ENCODE measurements at regions of chr11 and their contacts with region 1.

Region 1: DNA sequence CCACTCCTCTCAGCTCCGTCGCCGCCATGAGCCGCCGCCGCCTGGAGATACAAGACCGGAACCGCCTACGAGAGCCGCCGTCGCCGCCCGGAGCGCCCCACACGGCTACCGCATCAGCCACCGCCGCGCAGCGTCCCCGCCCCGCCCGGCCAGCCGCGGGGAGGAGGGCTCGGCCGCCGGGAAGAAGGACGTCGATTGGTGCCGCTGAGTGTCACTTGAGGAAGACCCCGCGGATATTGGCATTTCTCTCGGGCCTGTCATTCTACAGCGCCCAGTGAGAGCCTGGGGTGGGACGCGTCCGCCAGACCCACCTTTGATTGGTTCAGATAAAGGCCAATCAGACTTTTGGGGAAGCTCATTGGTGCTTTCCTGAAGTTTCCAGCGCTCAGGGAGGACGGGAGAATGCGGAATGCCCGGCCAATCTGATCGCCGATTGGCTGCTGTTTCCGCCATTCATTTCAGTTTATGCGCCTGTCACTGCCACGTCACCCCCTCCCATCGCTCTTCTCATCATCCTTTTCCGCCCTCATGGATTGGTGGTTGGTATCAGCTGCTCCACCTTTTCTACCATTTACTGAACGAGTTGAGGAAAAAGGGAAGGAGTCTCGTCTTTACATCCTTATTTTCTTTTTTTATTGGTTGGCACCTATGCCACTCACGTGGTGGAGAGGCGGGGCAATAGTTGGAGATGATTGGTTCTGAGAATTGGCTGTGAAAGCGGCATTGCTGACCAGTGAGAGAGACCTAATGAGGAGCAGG is at the start of gene OSBP:
- DNase-seq: peak; percentile 97 to 100
- ATAC-seq: peak; percentile 76 to 90 (median 78)
- H3K4me3 ChIP-seq: peak within 1 kb of the TSS; percentile 94
- H3K4me3 Mint-ChIP-seq: peak within 1 kb of the TSS; percentile 95
- H3K27ac ChIP-seq: peak within 1 kb of the TSS; percentile 87
- H3K27ac Mint-ChIP-seq: peak within 1 kb of the TSS; percentile 83 to 95
- H3K4me1 ChIP-seq: peaks cover 15% of the 10 kb centered on the region
- H3K4me1 Mint-ChIP-seq: peaks cover 51% of the 10 kb centered on the region in 2 donors
- H3K27me3 ChIP-seq: no peaks in the 10 kb centered on the region
- H3K27me3 Mint-ChIP-seq: no peaks in the 10 kb centered on the region
- CTCF ChIP-seq: no peak
- total RNA-seq, gene OSBP: 40.5 to 58.5 (median 51.3) TPM

Region 2: DNA sequence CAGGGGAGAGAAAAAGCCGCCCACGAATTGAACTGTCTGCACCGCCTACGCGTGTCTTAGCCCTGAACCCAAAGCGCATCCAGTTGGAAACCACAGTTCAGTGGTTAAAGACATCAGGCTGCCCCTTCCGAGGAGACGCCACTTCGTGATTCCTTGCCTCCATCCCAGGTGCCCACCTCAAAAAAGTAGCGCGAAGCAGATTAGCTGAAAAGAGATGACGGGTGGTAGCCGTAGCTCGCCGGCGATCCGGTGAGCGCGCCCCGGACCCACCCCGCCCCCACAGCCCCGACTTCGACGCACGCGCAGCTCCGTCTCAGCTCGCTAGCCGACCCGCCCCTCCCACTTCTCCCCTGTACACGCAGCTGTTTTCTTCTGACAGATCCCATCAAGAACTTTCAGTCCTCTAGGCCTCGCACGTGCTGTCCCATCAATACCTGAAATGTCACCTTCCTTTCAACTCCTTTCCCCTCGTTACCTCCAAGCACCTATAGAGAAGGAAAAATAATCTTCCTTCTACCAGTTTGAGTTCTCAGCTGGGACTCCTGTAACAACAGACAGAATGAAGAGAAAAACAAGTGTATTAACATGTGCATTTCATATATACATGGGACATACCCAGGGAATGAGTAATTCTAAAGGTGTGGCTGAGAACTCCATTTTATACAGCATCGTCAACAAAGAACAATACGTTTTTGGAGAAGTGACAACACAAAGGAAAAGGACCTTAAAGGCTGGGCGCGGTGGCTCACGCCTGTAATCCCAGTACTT is 54.9 kb before region 1 on chr11:
- intact Hi-C with region 1: loop called (anchors 2 kb)
- DNase-seq: peak; percentile 60 to 91
- ATAC-seq: peak; percentile 77 to 88 (median 79)
- H3K4me3 ChIP-seq: peak overlapping the region; percentile 86
- H3K4me3 Mint-ChIP-seq: peak overlapping the region; percentile 92
- H3K27ac ChIP-seq: peak overlapping the region; percentile 62
- H3K27ac Mint-ChIP-seq: peak overlapping the region; percentile 80 to 96
- H3K4me1 ChIP-seq: peaks cover 45% of the 10 kb centered on the region
- H3K4me1 Mint-ChIP-seq: peaks cover 45 to 49% of the 10 kb centered on the region in 2 donors
- H3K27me3 ChIP-seq: no peaks in the 10 kb centered on the region
- H3K27me3 Mint-ChIP-seq: peaks cover 10 to 12% of the 10 kb centered on the region in 2 donors
- CTCF ChIP-seq: no peak

Region 3: DNA sequence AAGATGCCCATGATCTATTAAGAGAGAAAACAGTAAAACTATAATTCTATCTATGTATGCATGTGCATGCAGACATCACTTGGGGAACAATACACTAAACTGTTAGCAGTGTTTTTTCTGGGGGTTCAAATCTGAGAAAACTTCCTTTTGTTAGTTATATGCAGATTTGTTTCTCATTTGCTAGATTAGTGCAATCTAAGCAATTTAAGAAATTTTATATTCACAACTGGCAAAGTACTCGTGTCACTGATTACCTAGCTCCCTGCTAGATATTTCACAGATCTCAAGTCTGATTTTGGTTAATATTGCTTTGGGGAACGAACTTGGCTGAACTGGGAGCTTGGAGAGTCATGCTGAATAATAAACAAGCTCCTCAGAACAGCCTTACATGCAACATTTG is 14.7 kb after region 1 on chr11:
- intact Hi-C with region 1: no loop called
- DNase-seq: no peak
- ATAC-seq: no peak
- H3K4me3 ChIP-seq: no peak overlapping the region
- H3K4me3 Mint-ChIP-seq: no peak overlapping the region
- H3K27ac ChIP-seq: no peak overlapping the region
- H3K27ac Mint-ChIP-seq: no peak overlapping the region
- H3K4me1 ChIP-seq: no peaks in the 10 kb centered on the region
- H3K4me1 Mint-ChIP-seq: no peaks in the 10 kb centered on the region
- H3K27me3 ChIP-seq: no peaks in the 10 kb centered on the region
- H3K27me3 Mint-ChIP-seq: no peaks in the 10 kb centered on the region
- CTCF ChIP-seq: no peak

Region 4: DNA sequence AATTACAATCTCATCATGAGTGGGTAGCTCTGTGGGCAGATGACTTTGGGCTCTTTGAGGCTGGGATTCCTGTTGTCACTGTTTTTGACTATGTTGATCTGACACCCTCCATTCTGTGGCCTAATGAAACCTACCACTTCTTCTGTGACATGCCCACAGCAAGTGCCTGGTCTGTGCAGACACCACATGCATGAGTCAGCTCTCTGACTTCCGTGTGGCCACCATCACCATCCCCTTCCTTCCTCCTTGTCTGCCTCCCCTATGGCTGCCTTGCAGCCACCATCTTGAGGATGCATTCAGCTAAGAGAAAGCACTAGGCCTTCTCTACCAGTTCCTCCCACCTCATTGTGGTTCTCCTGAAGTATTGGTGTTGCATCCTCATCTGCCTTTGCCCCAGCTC is 113.1 kb after region 1 on chr11:
- intact Hi-C with region 1: loop called (anchors 2 kb)
- DNase-seq: peak; percentile 23 to 43
- ATAC-seq: peak; percentile 93 to 99 (median 93)
- H3K4me3 ChIP-seq: no peak overlapping the region
- H3K4me3 Mint-ChIP-seq: no peak overlapping the region
- H3K27ac ChIP-seq: peak overlapping the region; percentile 61
- H3K27ac Mint-ChIP-seq: peak overlapping the region; percentile 84 to 86
- H3K4me1 ChIP-seq: peaks cover 9% of the 10 kb centered on the region
- H3K4me1 Mint-ChIP-seq: peaks cover 18% of the 10 kb centered on the region in 2 donors
- H3K27me3 ChIP-seq: no peaks in the 10 kb centered on the region
- H3K27me3 Mint-ChIP-seq: peaks cover 0 to 3% of the 10 kb centered on the region in 2 donors
- CTCF ChIP-seq: no peak

Region 5: DNA sequence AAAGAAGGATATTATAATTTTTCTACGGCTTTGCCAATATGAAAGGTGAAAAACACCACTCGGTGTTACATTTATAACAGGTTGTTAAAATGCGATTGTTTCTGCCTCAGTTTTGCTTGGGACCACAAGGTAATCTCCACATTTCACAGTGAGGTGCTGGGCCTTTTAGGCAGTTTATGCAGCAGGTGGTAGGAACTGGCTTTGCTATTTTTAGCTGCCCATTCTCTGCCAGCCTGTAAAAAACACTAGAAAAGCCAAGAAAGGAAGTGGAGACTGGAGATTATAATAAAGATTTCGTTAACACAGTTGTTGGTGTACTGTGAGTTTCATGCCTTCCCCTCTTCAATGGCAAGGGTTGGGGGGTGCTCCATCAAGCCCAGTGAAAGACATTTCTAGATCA is 202.8 kb after region 1 on chr11:
- intact Hi-C with region 1: no loop called
- DNase-seq: no peak
- ATAC-seq: no peak
- H3K4me3 ChIP-seq: no peak overlapping the region
- H3K4me3 Mint-ChIP-seq: no peak overlapping the region
- H3K27ac ChIP-seq: no peak overlapping the region
- H3K27ac Mint-ChIP-seq: no peak overlapping the region
- H3K4me1 ChIP-seq: peaks cover 6% of the 10 kb centered on the region
- H3K4me1 Mint-ChIP-seq: peaks cover 6 to 10% of the 10 kb centered on the region in 2 donors
- H3K27me3 ChIP-seq: no peaks in the 10 kb centered on the region
- H3K27me3 Mint-ChIP-seq: peaks cover 0 to 8% of the 10 kb centered on the region in 2 donors
- CTCF ChIP-seq: no peak

Region 6: GRCh38 chr11:60018058-60018457 is 402.2 kb after region 1 on chr11:
- intact Hi-C with region 1: no loop called
- DNase-seq: no peak
- ATAC-seq: peak in 1 of 3 donors; percentile 48
- H3K4me3 ChIP-seq: no peak overlapping the region
- H3K4me3 Mint-ChIP-seq: no peak overlapping the region
- H3K27ac ChIP-seq: no peak overlapping the region
- H3K27ac Mint-ChIP-seq: no peak overlapping the region
- H3K4me1 ChIP-seq: no peaks in the 10 kb centered on the region
- H3K4me1 Mint-ChIP-seq: no peaks in the 10 kb centered on the region
- H3K27me3 ChIP-seq: no peaks in the 10 kb centered on the region
- H3K27me3 Mint-ChIP-seq: peaks cover 3 to 7% of the 10 kb centered on the region in 2 donors
- CTCF ChIP-seq: no peak

Measured in natural killer cell (primary cell).